ENCODE measurements at regions of chr2 and their contacts with region 1.

Region 1: GRCh38 chr2:218852911-218853667 is 6.5 kb upstream of the WNT6 start:
- DNase-seq: peak; percentile 58 to 67 (median 62)
- H3K4me3 ChIP-seq: no peak overlapping the region
- H3K4me3 Mint-ChIP-seq: peak overlapping the region in 1 of 8 donors; percentile 31
- H3K27ac ChIP-seq: no peak overlapping the region
- H3K27ac Mint-ChIP-seq: peak overlapping the region in 2 of 7 donors; percentile 57 to 70
- H3K4me1 ChIP-seq: no peaks in the 10 kb centered on the region
- H3K4me1 Mint-ChIP-seq: peaks cover 0 to 9% (median 4%) of the 10 kb centered on the region in 4 donors
- H3K27me3 ChIP-seq: peaks cover 15% of the 10 kb centered on the region
- H3K27me3 Mint-ChIP-seq: peaks cover 33 to 52% of the 10 kb centered on the region in 2 donors

Region 2: GRCh38 chr2:218186355-218186766 is 666.7 kb before region 1 on chr2:
- CTCF ChIA-PET with region 1: interaction called, 3 read pairs
- POLR2A ChIA-PET with region 1: no interaction called
- intact Hi-C with region 1: loop called (anchors 5 kb)
- DNase-seq: peak; percentile 68 to 79 (median 73)
- H3K4me3 ChIP-seq: no peak overlapping the region
- H3K4me3 Mint-ChIP-seq: peak overlapping the region in 1 of 8 donors; percentile 3
- H3K27ac ChIP-seq: no peak overlapping the region
- H3K27ac Mint-ChIP-seq: peak overlapping the region in 2 of 7 donors; percentile 24 to 44
- H3K4me1 ChIP-seq: peaks cover 8% of the 10 kb centered on the region
- H3K4me1 Mint-ChIP-seq: peaks cover 5 to 8% (median 7%) of the 10 kb centered on the region in 4 donors
- H3K27me3 ChIP-seq: no peaks in the 10 kb centered on the region
- H3K27me3 Mint-ChIP-seq: peaks cover 0 to 1% of the 10 kb centered on the region in 2 donors

Region 3: GRCh38 chr2:218659258-218659987 is 193.7 kb before region 1 on chr2 and contains the starts of genes BCS1L and ZNF142:
- CTCF ChIA-PET with region 1: interaction called, 28 read pairs
- POLR2A ChIA-PET with region 1: interaction called, 4 read pairs
- intact Hi-C with region 1: no loop called
- DNase-seq: peak; percentile 90 to 94 (median 92)
- H3K4me3 ChIP-seq: peak within 1 kb of the TSS; percentile 50 to 78
- H3K4me3 Mint-ChIP-seq: peak within 1 kb of the TSS; percentile 91 to 100 (median 93)
- H3K27ac ChIP-seq: peak within 1 kb of the TSS; percentile 71
- H3K27ac Mint-ChIP-seq: peak within 1 kb of the TSS; percentile 92 to 98 (median 94)
- H3K4me1 ChIP-seq: peaks cover 28% of the 10 kb centered on the region
- H3K4me1 Mint-ChIP-seq: peaks cover 17 to 37% (median 31%) of the 10 kb centered on the region in 4 donors
- H3K27me3 ChIP-seq: no peaks in the 10 kb centered on the region
- H3K27me3 Mint-ChIP-seq: no peaks in the 10 kb centered on the region
- total RNA-seq, gene BCS1L: 53.0 to 57.2 TPM
- total RNA-seq, gene ZNF142: 44.4 to 54.5 TPM

Region 4: GRCh38 chr2:218727502-218728165 is 125.5 kb before region 1 on chr2:
- CTCF ChIA-PET with region 1: interaction called, 11 read pairs
- POLR2A ChIA-PET with region 1: no interaction called
- intact Hi-C with region 1: no loop called
- DNase-seq: peak in 1 of 5 donors; percentile 7
- H3K4me3 ChIP-seq: no peak overlapping the region
- H3K4me3 Mint-ChIP-seq: peak overlapping the region in 1 of 8 donors; percentile 27
- H3K27ac ChIP-seq: no peak overlapping the region
- H3K27ac Mint-ChIP-seq: no peak overlapping the region
- H3K4me1 ChIP-seq: no peaks in the 10 kb centered on the region
- H3K4me1 Mint-ChIP-seq: peaks cover 9 to 12% (median 10%) of the 10 kb centered on the region in 4 donors
- H3K27me3 ChIP-seq: no peaks in the 10 kb centered on the region
- H3K27me3 Mint-ChIP-seq: no peaks in the 10 kb centered on the region

Region 5: GRCh38 chr2:218898109-218898878 is 45.2 kb after region 1 on chr2:
- CTCF ChIA-PET with region 1: interaction called, 75 read pairs
- POLR2A ChIA-PET with region 1: interaction called, 4 read pairs
- intact Hi-C with region 1: loop called (anchors 1 kb)
- DNase-seq: peak; percentile 70 to 80 (median 71)
- H3K4me3 ChIP-seq: peak overlapping the region in 1 of 2 donors; percentile 64
- H3K4me3 Mint-ChIP-seq: peak overlapping the region; percentile 81 to 97 (median 84)
- H3K27ac ChIP-seq: peak overlapping the region; percentile 93
- H3K27ac Mint-ChIP-seq: peak overlapping the region; percentile 85 to 99 (median 95)
- H3K4me1 ChIP-seq: peaks cover 54% of the 10 kb centered on the region
- H3K4me1 Mint-ChIP-seq: peaks cover 33 to 49% (median 42%) of the 10 kb centered on the region in 4 donors
- H3K27me3 ChIP-seq: no peaks in the 10 kb centered on the region
- H3K27me3 Mint-ChIP-seq: peaks cover 8 to 17% of the 10 kb centered on the region in 2 donors

Region 6: DNA sequence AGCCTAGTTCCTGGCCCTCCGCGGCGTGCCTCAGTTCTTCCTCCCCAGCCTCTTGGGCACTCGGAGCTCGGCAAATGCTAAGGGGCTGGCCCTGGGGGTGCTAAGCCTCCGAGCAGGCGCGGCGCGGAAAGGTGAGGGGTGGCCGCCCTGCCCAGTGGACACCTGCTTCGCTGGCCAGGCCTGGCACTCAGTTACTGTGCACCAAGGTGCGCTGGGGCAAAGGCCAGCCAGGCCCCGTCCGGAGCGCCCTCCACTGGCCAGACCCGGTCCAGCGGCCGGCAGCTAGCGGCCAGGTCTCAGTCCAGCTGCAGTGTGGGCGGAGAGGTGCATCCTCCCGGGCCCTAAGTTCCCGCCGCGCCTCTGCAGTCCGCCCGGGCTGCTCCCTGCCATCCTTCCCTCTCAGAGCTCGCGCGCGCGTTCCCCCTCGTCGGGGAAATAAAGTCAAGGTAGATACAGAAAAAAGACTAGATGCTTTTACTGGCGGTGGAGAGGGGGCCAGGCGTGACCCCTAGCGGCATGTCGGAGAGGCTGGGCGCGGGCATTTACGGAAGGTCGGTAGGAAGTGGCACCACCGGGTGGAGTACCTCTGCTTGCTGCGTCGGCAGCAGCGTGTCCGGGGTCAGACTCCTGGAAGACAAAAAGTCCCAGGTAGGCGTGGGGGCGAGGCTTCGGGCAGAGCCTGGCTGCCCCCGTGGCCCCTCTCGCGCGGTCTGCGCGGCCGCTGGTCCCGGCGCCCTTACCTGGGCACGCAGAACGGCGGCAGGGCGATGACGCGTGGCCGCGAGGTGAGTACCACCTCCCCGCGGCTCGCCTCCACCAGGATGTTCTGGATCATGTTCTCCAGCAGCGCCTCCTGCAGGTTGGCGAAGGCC is 149.5 kb after region 1 on chr2:
- CTCF ChIA-PET with region 1: no interaction called
- POLR2A ChIA-PET with region 1: no interaction called
- intact Hi-C with region 1: loop called (anchors 2 kb)
- DNase-seq: peak; percentile 37 to 65 (median 44)
- H3K4me3 ChIP-seq: peak overlapping the region in 1 of 2 donors; percentile 32
- H3K4me3 Mint-ChIP-seq: peak overlapping the region; percentile 51 to 84 (median 72)
- H3K27ac ChIP-seq: no peak overlapping the region
- H3K27ac Mint-ChIP-seq: no peak overlapping the region
- H3K4me1 ChIP-seq: peaks cover 20% of the 10 kb centered on the region
- H3K4me1 Mint-ChIP-seq: peaks cover 6 to 18% (median 10%) of the 10 kb centered on the region in 4 donors
- H3K27me3 ChIP-seq: peaks cover 41% of the 10 kb centered on the region
- H3K27me3 Mint-ChIP-seq: peaks cover 47 to 60% of the 10 kb centered on the region in 2 donors

Region 7: GRCh38 chr2:219155054-219155644 is 302.1 kb after region 1 on chr2:
- CTCF ChIA-PET with region 1: no interaction called
- POLR2A ChIA-PET with region 1: no interaction called
- intact Hi-C with region 1: loop called (anchors 1 kb)
- DNase-seq: peak in 4 of 5 donors; percentile 50 to 62 (median 56)
- H3K4me3 ChIP-seq: no peak overlapping the region
- H3K4me3 Mint-ChIP-seq: no peak overlapping the region
- H3K27ac ChIP-seq: no peak overlapping the region
- H3K27ac Mint-ChIP-seq: no peak overlapping the region
- H3K4me1 ChIP-seq: peaks cover 6% of the 10 kb centered on the region
- H3K4me1 Mint-ChIP-seq: peaks cover 7 to 9% (median 8%) of the 10 kb centered on the region in 4 donors
- H3K27me3 ChIP-seq: no peaks in the 10 kb centered on the region
- H3K27me3 Mint-ChIP-seq: no peaks in the 10 kb centered on the region